ENCODE measurements at regions of chr14 and their contacts with region 1.

Region 1: GRCh38 chr14:77151918-77152588 is 10.5 kb upstream of the ZDHHC22 start:
- DNase-seq: no peak
- H3K4me3 ChIP-seq: no peak overlapping the region
- H3K27ac ChIP-seq: no peak overlapping the region
- H3K4me1 ChIP-seq: peaks cover 2 to 15% (median 2%) of the 10 kb centered on the region in 4 experiments; a peak in 3 of 7 replicates
- H3K27me3 ChIP-seq: no peaks in the 10 kb centered on the region
- CTCF ChIP-seq: peak in 1 of 3 experiments; percentile 12; a peak in 1 of 4 replicates
- EP300 ChIP-seq: no peak
- POLR2A ChIP-seq: no peak
- RAD21 ChIP-seq: peak; percentile 29 to 43

Region 2: DNA sequence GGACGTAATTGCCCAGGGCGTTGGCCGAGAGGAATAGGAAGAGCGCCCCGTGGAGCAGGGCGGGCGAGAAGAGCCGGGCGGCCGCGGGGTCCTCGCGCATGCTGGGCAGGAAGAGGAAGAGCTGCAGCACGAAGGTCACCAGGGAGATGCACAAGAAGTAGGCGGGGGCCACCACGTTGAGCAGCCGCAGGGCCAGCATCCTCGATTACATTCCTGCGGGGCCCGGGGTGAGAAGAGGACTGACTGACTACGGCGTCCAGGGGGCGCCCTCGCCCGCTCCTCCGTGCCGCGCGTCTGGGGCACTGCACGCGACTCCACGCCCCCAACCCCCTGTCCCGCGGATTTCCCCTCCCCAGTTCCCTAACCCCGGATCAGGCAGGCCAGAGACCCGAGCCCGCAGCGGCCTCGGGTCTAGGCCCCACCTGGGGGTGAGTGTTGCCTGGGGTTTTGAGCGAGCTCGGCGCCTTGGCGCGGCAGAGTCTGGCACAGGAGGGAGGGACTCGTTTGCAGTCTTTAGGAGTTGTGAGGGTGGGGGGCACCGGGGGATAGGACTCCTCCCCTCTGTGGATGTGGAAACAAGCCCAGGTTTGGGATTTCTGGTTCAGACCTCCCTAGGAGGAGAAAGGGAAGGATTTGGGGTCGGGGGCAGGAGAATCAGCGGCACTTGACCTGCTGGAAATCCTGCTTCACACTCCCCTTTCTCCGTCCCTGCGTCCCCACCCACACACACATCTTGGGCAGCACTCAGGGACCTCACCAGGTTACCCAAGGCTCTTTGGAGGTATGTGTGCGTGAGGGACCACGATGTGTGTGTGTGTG is 12.3 kb before region 1 on chr14:
- CTCF ChIA-PET with region 1: interaction called, 1,490 read pairs
- POLR2A ChIA-PET with region 1: interaction called, 9 read pairs
- DNase-seq: peak in 1 of 2 experiments; percentile 93
- H3K4me3 ChIP-seq: peak overlapping the region; percentile 69 to 79 (median 78)
- H3K27ac ChIP-seq: no peak overlapping the region
- H3K4me1 ChIP-seq: peaks cover 9 to 37% (median 22%) of the 10 kb centered on the region in 4 experiments
- H3K27me3 ChIP-seq: peaks cover 0 to 4% (median 2%) of the 10 kb centered on the region in 4 experiments; a peak in 3 of 7 replicates
- CTCF ChIP-seq: peak; percentile 73 to 90 (median 79)
- EP300 ChIP-seq: peak in 1 of 2 experiments; percentile 51; a peak in 1 of 3 replicates
- POLR2A ChIP-seq: no peak
- RAD21 ChIP-seq: peak; percentile 76 to 77

Region 3: GRCh38 chr14:77172916-77173315 is 20.9 kb after region 1 on chr14:
- CTCF ChIA-PET with region 1: interaction called, 18 read pairs
- POLR2A ChIA-PET with region 1: no interaction called
- DNase-seq: no peak
- H3K4me3 ChIP-seq: no peak overlapping the region
- H3K27ac ChIP-seq: no peak overlapping the region
- H3K4me1 ChIP-seq: no peaks in the 10 kb centered on the region
- H3K27me3 ChIP-seq: no peaks in the 10 kb centered on the region
- CTCF ChIP-seq: no peak
- EP300 ChIP-seq: no peak
- POLR2A ChIP-seq: no peak
- RAD21 ChIP-seq: no peak

Region 4: DNA sequence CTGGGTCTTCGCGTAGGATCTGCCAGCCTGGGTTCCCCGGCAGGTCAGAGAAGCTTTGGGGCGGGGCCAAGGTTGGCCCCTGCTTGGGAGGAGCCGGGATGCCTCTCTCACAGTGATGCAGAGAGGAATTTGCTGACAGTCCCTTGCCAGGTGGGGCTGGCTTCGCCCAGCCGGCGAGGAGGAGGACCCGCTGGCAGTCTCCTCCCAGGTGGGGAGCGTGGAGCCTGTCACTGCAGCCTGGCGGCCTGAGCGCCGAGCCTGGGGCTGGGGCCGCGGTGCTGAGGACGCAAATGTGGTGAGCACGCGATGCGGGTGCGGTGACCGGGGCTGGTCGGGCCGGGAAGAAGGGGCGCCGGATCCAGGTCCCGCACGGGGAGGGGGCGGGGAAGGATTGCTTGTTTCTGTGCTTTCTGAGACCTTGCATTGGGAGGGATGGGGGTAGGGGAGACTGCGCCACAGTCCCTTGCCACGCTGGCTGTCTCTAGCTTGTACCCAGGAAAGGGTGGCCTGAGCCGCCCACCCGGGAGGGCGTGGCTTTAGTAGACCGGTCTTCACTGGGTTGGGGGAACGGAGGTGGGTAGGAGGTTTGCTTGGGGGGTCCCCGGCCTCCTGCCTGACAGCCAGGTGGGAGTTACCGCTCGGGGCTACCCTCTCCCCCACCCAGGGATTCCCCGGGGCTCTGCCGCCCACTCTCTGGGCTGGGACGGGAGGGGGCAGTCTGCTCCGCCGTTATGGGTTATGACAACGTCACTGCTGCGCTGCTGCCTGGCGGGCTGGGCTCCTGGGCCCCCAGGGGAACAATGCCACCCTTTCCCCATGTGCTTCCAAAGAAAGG is 29.8 kb after region 1 on chr14 and contains the start of gene TMEM63C:
- CTCF ChIA-PET with region 1: interaction called, 71 read pairs
- POLR2A ChIA-PET with region 1: interaction called, 4 read pairs
- DNase-seq: peak; percentile 92 to 95
- H3K4me3 ChIP-seq: peak within 1 kb of the TSS; percentile 59 to 83 (median 72)
- H3K27ac ChIP-seq: no peak within 1 kb of the TSS
- H3K4me1 ChIP-seq: peaks cover 3 to 11% (median 7%) of the 10 kb centered on the region in 4 experiments; a peak in 6 of 7 replicates
- H3K27me3 ChIP-seq: peaks cover 0 to 3% (median 1%) of the 10 kb centered on the region in 4 experiments; a peak in 3 of 7 replicates
- CTCF ChIP-seq: no peak
- EP300 ChIP-seq: peak; percentile 3 to 44; a peak in 2 of 3 replicates
- POLR2A ChIP-seq: no peak
- RAD21 ChIP-seq: 0 out of 4 replicates have a peak, but pooled peaks of 1 of the 2 experiments have one; percentile 7
- total RNA-seq, gene TMEM63C: 7.0 and 7.6 TPM in 2 replicates

Region 5: GRCh38 chr14:77186911-77187648 is 35.0 kb after region 1 on chr14:
- CTCF ChIA-PET with region 1: interaction called, 71 read pairs
- POLR2A ChIA-PET with region 1: no interaction called
- DNase-seq: no peak
- H3K4me3 ChIP-seq: no peak overlapping the region
- H3K27ac ChIP-seq: no peak overlapping the region
- H3K4me1 ChIP-seq: peaks cover 0 to 10% (median 3%) of the 10 kb centered on the region in 4 experiments; a peak in 6 of 7 replicates
- H3K27me3 ChIP-seq: peaks cover 0 to 3% (median 1%) of the 10 kb centered on the region in 4 experiments; a peak in 3 of 7 replicates
- CTCF ChIP-seq: no peak
- EP300 ChIP-seq: no peak
- POLR2A ChIP-seq: no peak
- RAD21 ChIP-seq: no peak

Region 6: GRCh38 chr14:77245820-77246219 is 93.8 kb after region 1 on chr14:
- CTCF ChIA-PET with region 1: interaction called, 18 read pairs
- POLR2A ChIA-PET with region 1: no interaction called
- DNase-seq: no peak
- H3K4me3 ChIP-seq: no peak overlapping the region
- H3K27ac ChIP-seq: no peak overlapping the region
- H3K4me1 ChIP-seq: no peaks in the 10 kb centered on the region; a peak in 1 of 7 replicates
- H3K27me3 ChIP-seq: no peaks in the 10 kb centered on the region
- CTCF ChIP-seq: peak in 2 of 3 experiments; percentile 50 to 64; a peak in 3 of 4 replicates
- EP300 ChIP-seq: no peak
- POLR2A ChIP-seq: no peak
- RAD21 ChIP-seq: peak; percentile 48 to 62; a peak in 3 of 4 replicates

Region 7: GRCh38 chr14:77275601-77276017 is 123.6 kb after region 1 on chr14:
- CTCF ChIA-PET with region 1: interaction called, 32 read pairs
- POLR2A ChIA-PET with region 1: no interaction called
- DNase-seq: no peak
- H3K4me3 ChIP-seq: no peak overlapping the region
- H3K27ac ChIP-seq: no peak overlapping the region
- H3K4me1 ChIP-seq: peaks cover 0 to 4% (median 3%) of the 10 kb centered on the region in 4 experiments; a peak in 2 of 7 replicates
- H3K27me3 ChIP-seq: peaks cover 8 to 24% (median 23%) of the 10 kb centered on the region in 4 experiments
- CTCF ChIP-seq: peak; percentile 36 to 44 (median 38); a peak in 3 of 4 replicates
- EP300 ChIP-seq: no peak
- POLR2A ChIP-seq: no peak
- RAD21 ChIP-seq: peak; percentile 48 to 57

Region 8: GRCh38 chr14:77339407-77339806 is 187.4 kb after region 1 on chr14:
- CTCF ChIA-PET with region 1: no interaction called
- POLR2A ChIA-PET with region 1: no interaction called
- DNase-seq: no peak
- H3K4me3 ChIP-seq: no peak overlapping the region
- H3K27ac ChIP-seq: no peak overlapping the region
- H3K4me1 ChIP-seq: peaks cover 5 to 19% (median 10%) of the 10 kb centered on the region in 4 experiments
- H3K27me3 ChIP-seq: no peaks in the 10 kb centered on the region
- CTCF ChIP-seq: no peak
- EP300 ChIP-seq: no peak
- POLR2A ChIP-seq: no peak
- RAD21 ChIP-seq: no peak